Left cardiac atrium (tissue), 4 donors: ENCODE measurements at regions of chr11 and their contacts with region 1.

Region 1: DNA sequence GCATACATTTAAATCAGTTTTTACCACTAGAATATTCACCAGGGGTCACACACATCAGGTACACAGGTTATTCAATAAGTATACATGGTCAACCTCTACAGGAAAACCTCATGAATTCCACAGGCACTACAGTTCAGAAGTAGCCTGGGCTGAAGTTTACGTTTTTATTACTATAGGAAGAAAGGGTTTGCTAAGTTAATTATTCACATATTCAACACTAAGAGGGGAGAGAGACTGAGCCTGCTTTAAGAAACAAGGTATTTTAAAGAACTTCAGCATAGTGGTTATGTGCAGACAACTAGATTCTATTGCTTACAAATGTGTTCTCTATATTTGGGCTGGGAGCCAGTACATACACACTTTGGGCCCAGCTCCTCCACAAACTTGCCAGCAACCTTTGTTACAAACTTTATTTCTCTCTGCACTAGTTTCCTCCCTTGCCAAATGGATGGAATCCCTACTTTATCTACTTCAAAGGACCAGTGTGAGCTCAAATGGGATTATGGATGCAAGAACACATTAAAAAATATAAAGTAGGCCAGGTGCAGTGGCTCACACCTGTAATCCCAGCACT is 31.9 kb downstream of the IL18BP start:
- DNase-seq: no peak
- ATAC-seq: no peak

Region 2: GRCh38 chr11:72085621-72086351 is 55.2 kb after region 1 on chr11:
- intact Hi-C with region 1: loop called in 1 of 2 experiments (anchors 5 kb)
- DNase-seq: no peak
- ATAC-seq: no peak

Region 3: DNA sequence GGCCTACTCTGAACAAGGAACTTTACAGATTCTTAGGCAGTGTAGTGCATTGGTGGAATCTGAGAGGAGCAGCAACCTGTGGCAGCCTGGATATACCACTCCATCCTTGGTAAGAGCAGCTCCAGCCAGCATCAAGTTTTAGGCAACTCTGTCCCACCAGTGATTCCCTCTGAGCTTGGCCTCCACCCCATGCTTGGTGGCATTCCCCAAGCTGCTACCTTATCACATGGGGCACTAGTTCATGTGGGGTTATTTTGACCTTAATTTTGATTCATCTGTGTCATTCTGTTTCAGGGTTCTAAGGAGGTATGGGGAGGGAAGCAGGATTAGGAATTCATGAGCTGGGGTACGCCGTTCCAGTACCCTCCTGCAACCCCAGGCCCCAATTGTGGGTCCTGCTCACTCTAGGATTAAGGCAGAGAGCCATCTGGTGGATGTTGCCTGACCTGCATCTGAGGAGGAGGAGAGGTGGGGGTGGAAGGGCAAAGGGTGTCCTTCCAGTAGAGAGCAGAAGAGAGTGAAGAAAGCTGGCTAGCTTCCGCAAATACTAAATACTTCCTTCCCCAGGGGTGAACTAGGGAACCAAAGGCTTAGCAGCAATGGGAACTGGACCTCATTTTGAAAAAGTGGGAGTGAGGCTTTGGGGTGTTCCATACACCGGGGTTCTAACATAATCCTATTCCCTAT is 60.6 kb after region 1 on chr11:
- intact Hi-C with region 1: loop called (anchors 1 to 5 kb)
- DNase-seq: peak; percentile 72
- ATAC-seq: peak; percentile 90 to 96